ENCODE measurements at regions of chr9 and their contacts with region 1.

Region 1: DNA sequence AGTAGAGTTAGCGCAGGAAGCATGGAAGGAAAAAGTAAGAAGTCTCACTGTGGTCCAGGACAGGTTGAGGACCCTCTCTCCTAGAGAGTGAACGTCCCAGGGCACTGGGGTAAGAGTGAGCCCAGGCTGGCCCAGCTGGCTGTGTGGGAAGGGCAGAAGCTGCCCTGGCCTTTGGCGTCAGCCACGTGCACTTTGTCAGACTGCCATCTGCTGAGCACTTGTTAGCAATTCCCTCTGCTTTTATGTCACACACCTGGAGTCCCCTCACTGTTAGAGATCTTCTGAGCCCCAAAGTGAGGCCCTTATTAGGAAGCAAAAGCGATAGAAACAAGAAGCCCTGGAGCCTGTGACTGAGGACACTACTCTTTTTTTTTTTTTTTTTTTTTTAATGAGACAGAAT is 79.1 kb downstream of the UGCG start:
- DNase-seq: peak in 3 of 10 donors; percentile 14 to 19 (median 17)
- ATAC-seq: peak in 1 of 2 donors; percentile 61
- H3K4me3 Mint-ChIP-seq: no peak overlapping the region
- H3K27ac Mint-ChIP-seq: no peak overlapping the region
- H3K4me1 Mint-ChIP-seq: peaks cover 5 to 18% (median 11%) of the 10 kb centered on the region in 4 donors
- H3K27me3 Mint-ChIP-seq: peaks cover 0 to 4% (median 0%) of the 10 kb centered on the region in 5 donors

Region 2: DNA sequence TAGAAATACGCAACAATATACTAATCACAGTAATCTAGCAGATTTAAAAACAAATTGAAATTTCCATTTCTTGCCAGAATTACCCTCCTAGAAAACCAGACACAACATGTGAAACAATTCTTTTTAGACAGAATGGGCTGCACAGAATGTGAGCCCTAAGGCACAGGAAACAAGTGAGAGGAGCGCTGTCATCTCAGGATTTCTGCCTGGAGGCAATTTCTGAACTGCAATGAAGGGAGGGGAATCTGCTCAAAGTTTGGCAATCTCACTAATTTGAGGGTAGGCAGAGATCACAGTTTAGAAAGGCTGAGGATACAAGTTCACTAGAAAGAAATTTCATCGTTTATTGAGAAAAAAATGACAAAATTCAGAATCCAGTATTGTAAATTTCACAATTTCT is 671.9 kb after region 1 on chr9:
- POLR2A ChIA-PET with region 1: interaction called, 10 read pairs
- DNase-seq: no peak
- ATAC-seq: no peak
- H3K4me3 Mint-ChIP-seq: no peak overlapping the region
- H3K27ac Mint-ChIP-seq: no peak overlapping the region
- H3K4me1 Mint-ChIP-seq: no peaks in the 10 kb centered on the region
- H3K27me3 Mint-ChIP-seq: no peaks in the 10 kb centered on the region

Measured in naive thymus-derived CD8-positive, alpha-beta T cell (primary cell).